Caco-2 (cell line): ENCODE measurements at regions of chr5 and their contacts with region 1.

Region 1: DNA sequence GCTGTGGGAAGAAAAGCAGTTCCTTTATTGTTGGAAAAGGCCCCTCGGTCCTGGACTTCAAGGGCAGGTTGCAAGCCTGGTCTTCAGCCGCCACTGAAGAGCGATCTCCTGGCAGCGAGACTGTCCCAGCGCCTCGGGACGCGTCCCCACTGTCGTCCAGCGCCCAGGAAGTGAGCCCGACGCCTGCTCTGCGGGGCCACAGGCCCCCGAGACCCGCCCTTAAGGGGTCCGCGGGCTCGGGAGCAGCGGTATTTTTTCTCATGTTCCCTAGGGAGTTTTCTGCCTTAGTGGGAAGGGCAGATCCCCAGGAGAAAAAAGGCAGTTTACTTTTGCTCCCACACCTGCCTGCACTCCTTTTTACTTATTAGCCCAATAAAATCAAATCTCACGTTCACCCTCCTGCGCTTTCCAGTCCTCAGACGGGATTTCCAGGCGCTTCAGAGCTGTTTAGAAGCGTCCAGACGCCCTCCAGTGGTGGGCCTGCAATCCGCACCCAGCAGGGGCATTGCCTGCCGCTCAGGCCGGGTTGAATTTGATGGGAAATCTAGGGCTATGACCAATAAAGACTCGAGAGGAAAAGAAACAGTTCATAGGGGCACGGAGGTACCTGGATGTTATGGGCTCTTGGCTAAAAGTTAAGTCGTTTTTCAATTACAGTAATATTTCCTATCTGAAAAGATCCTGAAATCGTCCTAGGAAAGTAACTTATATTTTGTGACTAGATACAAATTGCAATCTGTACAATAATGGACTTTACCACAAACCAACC is 2.8 kb upstream of the EFNA5 start:
- DNase-seq: peak; percentile 88 to 90
- H3K4me3 ChIP-seq: peak overlapping the region; percentile 44
- H3K4me3 Mint-ChIP-seq: peak overlapping the region; percentile 85
- H3K27ac Mint-ChIP-seq: no peak overlapping the region
- H3K4me1 ChIP-seq: peaks cover 1% of the 10 kb centered on the region; the same call in 1 of the 2 replicates
- H3K4me1 Mint-ChIP-seq: peaks cover 5% of the 10 kb centered on the region
- H3K27me3 ChIP-seq: peaks cover 4% of the 10 kb centered on the region
- H3K27me3 Mint-ChIP-seq: peaks cover 29% of the 10 kb centered on the region
- CTCF ChIP-seq: peak; percentile 94 to 98

Region 2: DNA sequence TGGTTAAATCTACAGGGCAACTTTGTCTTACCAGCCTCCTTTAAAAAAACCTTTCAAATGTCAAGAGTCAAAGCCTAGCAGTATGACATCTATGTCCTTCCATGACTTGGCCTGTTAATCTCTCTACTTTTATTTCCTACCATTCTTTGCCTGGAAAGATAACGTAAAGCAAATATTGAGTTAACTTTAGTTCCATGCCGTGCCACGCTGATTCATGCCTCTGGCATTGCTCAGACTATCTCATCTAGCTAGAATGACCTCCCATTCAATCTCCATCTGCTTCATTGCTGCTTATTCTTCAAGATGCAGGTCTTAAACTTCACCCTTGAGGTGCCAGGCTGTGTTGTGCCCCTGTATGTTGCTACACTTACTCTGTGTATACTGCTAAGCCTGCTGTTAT is 732.6 kb before region 1 on chr5:
- CTCF ChIA-PET with region 1: no interaction called
- POLR2A ChIA-PET with region 1: no interaction called
- intact Hi-C with region 1: loop called (anchors 10 kb)
- DNase-seq: peak; percentile 69 to 77
- H3K4me3 ChIP-seq: no peak overlapping the region
- H3K4me3 Mint-ChIP-seq: peak overlapping the region; percentile 41
- H3K27ac Mint-ChIP-seq: peak overlapping the region; percentile 94
- H3K4me1 ChIP-seq: peaks cover 21% of the 10 kb centered on the region
- H3K4me1 Mint-ChIP-seq: peaks cover 18% of the 10 kb centered on the region
- H3K27me3 ChIP-seq: no peaks in the 10 kb centered on the region
- H3K27me3 Mint-ChIP-seq: no peaks in the 10 kb centered on the region
- CTCF ChIP-seq: no peak

Region 3: DNA sequence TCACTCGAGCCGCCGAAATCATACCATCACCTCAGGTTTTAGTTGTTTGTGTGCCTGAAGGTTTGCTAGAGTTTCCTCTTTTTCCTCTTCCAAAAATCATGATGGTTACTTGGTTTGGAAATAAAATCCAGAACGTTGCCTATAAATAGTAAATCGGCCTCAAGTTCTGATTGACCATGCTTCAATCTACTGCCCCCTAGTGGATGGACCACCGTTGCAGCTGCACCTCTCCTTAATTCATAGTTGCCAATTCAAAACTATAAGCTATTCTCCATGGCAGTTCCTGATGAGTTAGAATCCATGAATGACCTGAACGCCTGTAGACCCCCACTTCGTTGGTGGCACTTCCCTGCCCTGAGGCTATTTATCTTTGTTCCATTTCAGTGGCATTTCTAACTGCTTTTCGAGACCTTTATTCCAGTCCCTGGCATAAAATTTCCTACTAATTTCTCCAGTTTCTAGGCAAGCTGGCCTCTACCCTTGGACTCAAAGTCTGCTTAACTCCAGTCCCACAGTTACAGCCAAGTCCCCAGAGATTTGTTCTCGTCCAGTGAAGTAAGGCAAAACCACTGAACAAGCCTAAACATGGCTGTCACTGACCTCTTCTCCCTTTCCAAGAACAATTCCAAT is 425.4 kb before region 1 on chr5:
- CTCF ChIA-PET with region 1: no interaction called
- POLR2A ChIA-PET with region 1: no interaction called
- intact Hi-C with region 1: loop called (anchors 5 kb)
- DNase-seq: peak; percentile 44 to 61
- H3K4me3 ChIP-seq: no peak overlapping the region
- H3K4me3 Mint-ChIP-seq: no peak overlapping the region
- H3K27ac Mint-ChIP-seq: no peak overlapping the region
- H3K4me1 ChIP-seq: no peaks in the 10 kb centered on the region
- H3K4me1 Mint-ChIP-seq: no peaks in the 10 kb centered on the region
- H3K27me3 ChIP-seq: no peaks in the 10 kb centered on the region
- H3K27me3 Mint-ChIP-seq: peaks cover 9% of the 10 kb centered on the region
- CTCF ChIP-seq: peak; percentile 62 to 79

Region 4: GRCh38 chr5:107389130-107389774 is 284.3 kb before region 1 on chr5:
- CTCF ChIA-PET with region 1: no interaction called
- POLR2A ChIA-PET with region 1: no interaction called
- intact Hi-C with region 1: loop called (anchors 2 kb)
- DNase-seq: no peak
- H3K4me3 ChIP-seq: no peak overlapping the region
- H3K4me3 Mint-ChIP-seq: no peak overlapping the region
- H3K27ac Mint-ChIP-seq: no peak overlapping the region
- H3K4me1 ChIP-seq: peaks cover 32% of the 10 kb centered on the region
- H3K4me1 Mint-ChIP-seq: peaks cover 17% of the 10 kb centered on the region
- H3K27me3 ChIP-seq: no peaks in the 10 kb centered on the region
- H3K27me3 Mint-ChIP-seq: no peaks in the 10 kb centered on the region
- CTCF ChIP-seq: no peak

Region 5: DNA sequence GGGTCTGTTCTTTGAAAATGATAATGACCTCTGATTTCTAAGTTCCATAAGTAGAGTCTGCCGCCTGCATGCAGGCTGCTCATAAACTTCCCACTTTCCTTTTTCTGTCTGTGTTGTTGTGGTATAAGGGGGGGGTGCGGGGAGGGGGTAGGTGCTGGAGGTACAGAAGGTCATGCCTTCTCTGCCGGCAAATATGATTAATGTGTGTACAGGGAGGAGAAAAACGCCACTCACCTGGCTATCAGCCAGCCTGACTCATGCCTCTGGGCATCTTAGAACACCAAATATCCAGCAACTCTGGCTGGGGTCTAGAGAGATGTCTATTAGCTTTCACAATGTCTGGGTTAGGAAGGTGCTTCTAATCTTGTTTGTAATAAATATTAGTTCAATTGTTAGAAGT is 131.1 kb before region 1 on chr5:
- CTCF ChIA-PET with region 1: interaction called, 3 read pairs
- POLR2A ChIA-PET with region 1: no interaction called
- intact Hi-C with region 1: loop called (anchors 5 kb)
- DNase-seq: peak; percentile 34 to 44
- H3K4me3 ChIP-seq: no peak overlapping the region
- H3K4me3 Mint-ChIP-seq: no peak overlapping the region
- H3K27ac Mint-ChIP-seq: no peak overlapping the region
- H3K4me1 ChIP-seq: peaks cover 10% of the 10 kb centered on the region; the same call in 1 of the 2 replicates
- H3K4me1 Mint-ChIP-seq: no peaks in the 10 kb centered on the region
- H3K27me3 ChIP-seq: no peaks in the 10 kb centered on the region
- H3K27me3 Mint-ChIP-seq: no peaks in the 10 kb centered on the region
- CTCF ChIP-seq: no peak

Region 6: GRCh38 chr5:107604832-107605389 is 68.6 kb before region 1 on chr5:
- CTCF ChIA-PET with region 1: no interaction called
- POLR2A ChIA-PET with region 1: no interaction called
- intact Hi-C with region 1: loop called (anchors 5 kb)
- DNase-seq: no peak
- H3K4me3 ChIP-seq: no peak overlapping the region
- H3K4me3 Mint-ChIP-seq: no peak overlapping the region
- H3K27ac Mint-ChIP-seq: no peak overlapping the region
- H3K4me1 ChIP-seq: no peaks in the 10 kb centered on the region
- H3K4me1 Mint-ChIP-seq: peaks cover 9% of the 10 kb centered on the region
- H3K27me3 ChIP-seq: no peaks in the 10 kb centered on the region
- H3K27me3 Mint-ChIP-seq: peaks cover 6% of the 10 kb centered on the region
- CTCF ChIP-seq: no peak

Region 7: DNA sequence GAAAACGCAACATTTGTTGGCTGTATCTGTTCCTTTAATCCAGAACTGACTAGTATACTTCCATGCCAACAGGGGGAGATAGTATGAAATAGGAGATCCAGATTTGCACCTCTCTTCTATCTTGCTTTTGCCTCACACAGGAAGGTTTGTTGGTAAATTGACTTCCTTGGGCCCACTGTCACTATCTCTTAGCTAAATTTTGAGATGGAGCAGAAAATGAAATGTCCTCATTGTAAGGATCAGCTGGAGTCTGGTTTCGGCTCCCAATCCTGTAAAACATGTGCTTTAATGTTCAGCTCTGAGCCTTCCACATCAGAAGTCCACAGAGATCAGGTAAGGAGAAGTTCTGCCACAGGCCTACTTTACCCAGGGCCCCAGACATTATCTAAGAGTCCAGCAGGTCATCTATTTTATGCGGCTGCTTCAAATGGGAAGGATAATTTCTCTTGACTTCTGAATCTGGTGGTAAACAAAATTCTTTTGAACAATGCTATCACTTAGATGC is 1251.0 kb after region 1 on chr5:
- CTCF ChIA-PET with region 1: no interaction called
- POLR2A ChIA-PET with region 1: no interaction called
- intact Hi-C with region 1: no loop called
- DNase-seq: peak; percentile 34 to 35
- H3K4me3 ChIP-seq: peak overlapping the region; percentile 30
- H3K4me3 Mint-ChIP-seq: peak overlapping the region; percentile 64
- H3K27ac Mint-ChIP-seq: peak overlapping the region; percentile 48
- H3K4me1 ChIP-seq: no peaks in the 10 kb centered on the region
- H3K4me1 Mint-ChIP-seq: no peaks in the 10 kb centered on the region
- H3K27me3 ChIP-seq: no peaks in the 10 kb centered on the region
- H3K27me3 Mint-ChIP-seq: no peaks in the 10 kb centered on the region
- CTCF ChIP-seq: peak; percentile 33 to 45